Heart right ventricle (tissue), 16 donors: ENCODE measurements at regions of chr7 and their contacts with region 1.

Region 1: GRCh38 chr7:100673300-100673941 is at the start of gene GNB2:
- DNase-seq: peak; percentile 99
- ATAC-seq: peak; percentile 92 to 95 (median 94)
- H3K4me3 ChIP-seq: peak within 1 kb of the TSS; percentile 95 to 99 (median 96)
- H3K27ac ChIP-seq: peak within 1 kb of the TSS; percentile 78 to 100 (median 98)
- H3K4me1 ChIP-seq: peaks cover 0 to 34% (median 22%) of the 10 kb centered on the region in 9 donors
- H3K27me3 ChIP-seq: no peaks in the 10 kb centered on the region
- CTCF ChIP-seq: no peak
- total RNA-seq, gene GNB2: 91.6 to 150 (median 106) TPM

Region 2: GRCh38 chr7:100478966-100479665 is 194.3 kb before region 1 on chr7 and contains the start of gene TSC22D4:
- intact Hi-C with region 1: loop called in 1 of 10 experiments (anchors 10 kb)
- DNase-seq: peak; percentile 95 to 97
- ATAC-seq: peak; percentile 88 to 94 (median 92)
- H3K4me3 ChIP-seq: peak within 1 kb of the TSS; percentile 74 to 100 (median 98)
- H3K27ac ChIP-seq: peak within 1 kb of the TSS; percentile 87 to 100 (median 96)
- H3K4me1 ChIP-seq: peaks cover 10 to 61% (median 50%) of the 10 kb centered on the region in 9 donors
- H3K27me3 ChIP-seq: no peaks in the 10 kb centered on the region
- CTCF ChIP-seq: no peak
- total RNA-seq, gene TSC22D4: 36.0 to 72.3 (median 46.7) TPM

Region 3: DNA sequence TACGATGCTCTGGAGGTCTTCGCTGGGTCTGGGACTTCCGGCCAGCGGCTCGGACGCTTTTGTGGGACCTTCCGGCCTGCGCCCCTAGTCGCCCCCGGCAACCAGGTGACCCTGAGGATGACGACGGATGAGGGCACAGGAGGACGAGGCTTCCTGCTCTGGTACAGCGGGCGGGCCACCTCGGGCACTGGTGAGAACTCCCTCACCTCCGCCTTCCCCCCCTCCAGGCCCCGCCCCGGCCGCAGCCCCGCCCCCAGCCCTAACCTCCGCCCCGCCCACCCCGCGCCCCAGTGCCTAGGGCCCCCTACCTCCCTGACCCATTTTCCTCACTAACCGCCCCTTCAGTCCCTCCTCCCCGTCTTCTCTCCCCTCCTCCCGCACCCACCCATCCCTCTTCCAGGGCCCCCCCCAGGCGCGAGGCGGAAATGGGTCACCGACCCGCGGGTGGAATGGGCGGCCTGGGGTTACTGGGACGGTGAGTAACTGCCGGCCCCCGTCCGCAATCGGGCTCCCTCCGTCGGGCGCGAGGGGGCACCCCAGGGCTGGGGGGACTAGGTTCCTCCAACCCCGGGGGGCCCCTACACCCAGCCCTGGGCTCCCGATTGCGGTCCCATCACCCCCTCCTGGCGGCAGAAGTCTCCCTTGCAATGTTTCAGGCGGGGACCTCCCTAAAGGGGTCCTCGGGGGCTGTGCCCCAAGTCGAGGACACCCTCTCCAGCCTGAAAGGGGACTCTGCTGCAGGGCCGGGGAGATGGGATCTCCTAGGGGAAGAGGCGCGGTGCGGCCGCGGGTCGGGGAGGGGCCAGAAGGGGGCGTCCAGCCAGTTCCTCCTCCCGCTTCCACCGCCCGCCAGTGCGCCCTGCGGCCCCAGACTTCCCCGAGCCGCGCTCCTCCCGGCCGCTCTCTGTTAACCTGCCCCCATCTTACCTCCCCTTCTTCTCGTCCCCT is 69.1 kb before region 1 on chr7:
- intact Hi-C with region 1: loop called in 2 of 10 experiments (anchors 2 to 5 kb)
- DNase-seq: peak; percentile 75 to 86
- ATAC-seq: peak; percentile 76 to 86 (median 82)
- H3K4me3 ChIP-seq: peak overlapping the region; percentile 45 to 86 (median 74)
- H3K27ac ChIP-seq: peak overlapping the region; percentile 35 to 88 (median 80)
- H3K4me1 ChIP-seq: peaks cover 0 to 36% (median 23%) of the 10 kb centered on the region in 9 donors
- H3K27me3 ChIP-seq: peaks cover 0 to 11% (median 0%) of the 10 kb centered on the region in 7 donors
- CTCF ChIP-seq: peak in 8 of 9 donors; percentile 26 to 66 (median 55)

Region 4: GRCh38 chr7:100626530-100627237 is 46.7 kb before region 1 on chr7:
- intact Hi-C with region 1: loop called in 2 of 10 experiments (anchors 5 kb)
- DNase-seq: peak; percentile 77 to 85
- ATAC-seq: peak; percentile 90 to 97 (median 96)
- H3K4me3 ChIP-seq: peak overlapping the region in 9 of 10 donors; percentile 13 to 53 (median 42)
- H3K27ac ChIP-seq: peak overlapping the region in 2 of 10 donors; percentile 12 to 79
- H3K4me1 ChIP-seq: peaks cover 3 to 12% (median 9%) of the 10 kb centered on the region in 9 donors
- H3K27me3 ChIP-seq: peaks cover 0 to 9% (median 2%) of the 10 kb centered on the region in 7 donors
- CTCF ChIP-seq: no peak

Region 5: GRCh38 chr7:100705753-100706671 is 32.6 kb after region 1 on chr7 and contains the start of gene POP7:
- intact Hi-C with region 1: loop called in 1 of 10 experiments (anchors 1 kb)
- DNase-seq: peak; percentile 99
- ATAC-seq: peak; percentile 97 to 99 (median 98)
- H3K4me3 ChIP-seq: peak within 1 kb of the TSS; percentile 63 to 95 (median 77)
- H3K27ac ChIP-seq: peak within 1 kb of the TSS; percentile 84 to 99 (median 94)
- H3K4me1 ChIP-seq: peaks cover 4 to 24% (median 17%) of the 10 kb centered on the region in 9 donors
- H3K27me3 ChIP-seq: no peaks in the 10 kb centered on the region
- CTCF ChIP-seq: no peak
- total RNA-seq, gene POP7: 23.2 to 34.9 (median 25.3) TPM

Region 6: GRCh38 chr7:100901921-100902332 is 228.5 kb after region 1 on chr7:
- intact Hi-C with region 1: no loop called
- DNase-seq: no peak
- ATAC-seq: no peak
- H3K4me3 ChIP-seq: no peak overlapping the region
- H3K27ac ChIP-seq: no peak overlapping the region
- H3K4me1 ChIP-seq: peaks cover 0 to 6% (median 0%) of the 10 kb centered on the region in 9 donors
- H3K27me3 ChIP-seq: peaks cover 0 to 51% (median 35%) of the 10 kb centered on the region in 7 donors
- CTCF ChIP-seq: no peak